ENCODE measurements at regions of chr2 and their contacts with region 1.

Region 1: GRCh38 chr2:187168720-187169713 is 279.0 kb downstream of the CALCRL start:
- DNase-seq: no peak
- ATAC-seq: peak in 4 of 8 donors; percentile 27 to 65 (median 54)
- H3K4me3 ChIP-seq: no peak overlapping the region
- H3K27ac ChIP-seq: peak overlapping the region in 1 of 10 donors; percentile 4
- H3K4me1 ChIP-seq: peaks cover 0 to 17% (median 4%) of the 10 kb centered on the region in 9 donors
- H3K27me3 ChIP-seq: no peaks in the 10 kb centered on the region
- CTCF ChIP-seq: no peak

Region 2: GRCh38 chr2:186862869-186863709 is 305.9 kb before region 1 on chr2:
- intact Hi-C with region 1: no loop called
- DNase-seq: no peak
- ATAC-seq: peak in 6 of 8 donors; percentile 44 to 75 (median 60)
- H3K4me3 ChIP-seq: no peak overlapping the region
- H3K27ac ChIP-seq: peak overlapping the region in 2 of 10 donors; percentile 22 to 59
- H3K4me1 ChIP-seq: peaks cover 0 to 13% (median 5%) of the 10 kb centered on the region in 9 donors
- H3K27me3 ChIP-seq: no peaks in the 10 kb centered on the region
- CTCF ChIP-seq: peak; percentile 64 to 90 (median 72)

Region 3: DNA sequence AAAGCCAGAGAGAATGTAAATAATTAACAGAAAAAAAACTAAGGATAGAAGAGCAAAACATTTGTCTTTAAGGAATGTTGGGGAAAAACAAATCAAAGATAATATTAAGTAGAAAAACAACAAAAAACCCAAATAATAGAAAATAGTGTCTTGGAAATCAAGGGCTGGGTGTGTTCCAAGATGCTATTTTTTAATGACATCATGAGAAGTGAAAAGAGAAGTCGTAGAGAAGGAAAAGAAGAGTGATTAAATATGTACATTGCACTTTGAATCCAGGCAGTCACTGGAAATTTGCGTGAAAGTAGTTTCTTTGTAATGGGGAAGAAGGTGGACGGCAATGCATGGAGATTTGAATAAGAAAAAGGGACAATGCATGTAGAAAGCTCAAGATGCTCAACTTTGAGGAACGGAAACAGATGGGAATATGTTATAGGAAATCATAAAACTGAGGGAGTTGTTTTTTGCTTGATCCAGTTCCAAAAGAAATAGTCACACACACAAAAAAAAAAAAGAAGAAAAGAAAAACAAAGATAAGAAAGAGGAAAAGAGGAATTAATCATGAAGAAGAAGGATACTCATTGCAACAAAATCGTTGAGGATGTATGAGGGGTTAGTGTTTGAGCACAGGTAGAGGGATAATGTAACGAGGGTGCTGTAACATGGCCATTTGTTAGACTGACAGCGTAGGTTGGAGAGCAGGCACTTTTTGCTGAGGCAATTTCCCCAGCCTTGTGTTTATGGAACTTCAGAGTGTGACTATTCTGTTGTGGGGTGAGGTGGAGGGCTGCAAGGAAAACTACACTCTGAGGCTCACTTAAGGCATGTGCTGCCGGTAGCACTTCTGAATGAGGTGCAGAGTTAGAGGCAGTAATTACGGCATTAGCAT is 94.9 kb after region 1 on chr2:
- intact Hi-C with region 1: loop called in 1 of 10 experiments (anchors 10 kb)
- DNase-seq: no peak
- ATAC-seq: no peak
- H3K4me3 ChIP-seq: no peak overlapping the region
- H3K27ac ChIP-seq: no peak overlapping the region
- H3K4me1 ChIP-seq: peaks cover 0 to 8% (median 0%) of the 10 kb centered on the region in 9 donors
- H3K27me3 ChIP-seq: no peaks in the 10 kb centered on the region
- CTCF ChIP-seq: no peak